Aorta (tissue), 5 donors: ENCODE measurements at regions of chr1 and their contacts with region 1.

Region 1: GRCh38 chr1:182143154-182143657 is 81.7 kb upstream of the ZNF648 start:
- DNase-seq: peak; percentile 95 to 98
- ATAC-seq: peak; percentile 88
- H3K4me3 ChIP-seq: no peak overlapping the region
- H3K27ac ChIP-seq: no peak overlapping the region
- H3K4me1 ChIP-seq: no peaks in the 10 kb centered on the region
- H3K27me3 ChIP-seq: no peaks in the 10 kb centered on the region

Region 2: GRCh38 chr1:182163821-182164223 is 20.6 kb after region 1 on chr1:
- intact Hi-C with region 1: no loop called
- DNase-seq: peak in 1 of 2 donors; percentile 51
- ATAC-seq: peak; percentile 75
- H3K4me3 ChIP-seq: no peak overlapping the region
- H3K27ac ChIP-seq: no peak overlapping the region
- H3K4me1 ChIP-seq: peaks cover 0 to 5% of the 10 kb centered on the region in 2 donors
- H3K27me3 ChIP-seq: no peaks in the 10 kb centered on the region

Region 3: DNA sequence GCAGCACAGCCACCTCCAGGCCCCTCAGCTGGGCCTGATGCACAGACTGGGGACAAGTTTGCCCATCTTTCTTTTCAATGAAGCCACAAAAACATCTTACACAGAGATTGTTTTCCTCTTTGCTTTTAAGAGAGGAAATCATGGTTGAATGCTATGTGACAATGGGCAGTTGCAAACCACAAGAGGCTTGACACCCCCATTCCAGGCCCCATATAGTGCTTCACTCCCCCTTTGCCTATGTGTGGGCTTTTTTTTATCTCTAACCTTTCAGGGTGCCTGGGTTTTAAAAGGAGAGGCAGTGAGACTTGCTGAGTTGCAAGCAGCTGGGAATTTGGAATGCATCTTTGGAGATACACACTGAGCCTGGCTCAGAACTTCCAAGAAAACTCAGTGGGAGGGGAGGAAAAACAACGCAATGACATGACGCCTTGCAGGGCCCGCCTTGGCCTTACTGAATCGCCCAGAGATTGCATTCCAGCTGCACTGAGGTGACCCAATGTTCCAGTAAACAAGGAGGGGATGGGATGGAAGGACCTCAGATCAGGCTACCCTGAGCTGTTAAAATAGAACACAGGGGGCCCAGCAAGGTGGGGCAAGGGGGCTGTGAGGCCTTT is 63.5 kb after region 1 on chr1:
- intact Hi-C with region 1: no loop called
- DNase-seq: peak; percentile 58 to 75
- ATAC-seq: peak; percentile 89
- H3K4me3 ChIP-seq: no peak overlapping the region
- H3K27ac ChIP-seq: peak overlapping the region in 1 of 2 donors; percentile 43
- H3K4me1 ChIP-seq: peaks cover 0 to 2% of the 10 kb centered on the region in 2 donors
- H3K27me3 ChIP-seq: no peaks in the 10 kb centered on the region

Region 4: GRCh38 chr1:182291584-182292192 is 148.5 kb after region 1 on chr1:
- intact Hi-C with region 1: no loop called
- DNase-seq: no peak
- ATAC-seq: no peak
- H3K4me3 ChIP-seq: no peak overlapping the region
- H3K27ac ChIP-seq: no peak overlapping the region
- H3K4me1 ChIP-seq: peaks cover 5 to 13% of the 10 kb centered on the region in 2 donors
- H3K27me3 ChIP-seq: no peaks in the 10 kb centered on the region

Region 5: GRCh38 chr1:182397771-182398393 is 254.7 kb after region 1 on chr1:
- intact Hi-C with region 1: loop called (anchors 1 to 2 kb)
- DNase-seq: no peak
- ATAC-seq: no peak
- H3K4me3 ChIP-seq: no peak overlapping the region
- H3K27ac ChIP-seq: no peak overlapping the region
- H3K4me1 ChIP-seq: no peaks in the 10 kb centered on the region
- H3K27me3 ChIP-seq: no peaks in the 10 kb centered on the region